HEK293 (cell line): ENCODE measurements at regions of chr5 and their contacts with region 1.

Region 1: DNA sequence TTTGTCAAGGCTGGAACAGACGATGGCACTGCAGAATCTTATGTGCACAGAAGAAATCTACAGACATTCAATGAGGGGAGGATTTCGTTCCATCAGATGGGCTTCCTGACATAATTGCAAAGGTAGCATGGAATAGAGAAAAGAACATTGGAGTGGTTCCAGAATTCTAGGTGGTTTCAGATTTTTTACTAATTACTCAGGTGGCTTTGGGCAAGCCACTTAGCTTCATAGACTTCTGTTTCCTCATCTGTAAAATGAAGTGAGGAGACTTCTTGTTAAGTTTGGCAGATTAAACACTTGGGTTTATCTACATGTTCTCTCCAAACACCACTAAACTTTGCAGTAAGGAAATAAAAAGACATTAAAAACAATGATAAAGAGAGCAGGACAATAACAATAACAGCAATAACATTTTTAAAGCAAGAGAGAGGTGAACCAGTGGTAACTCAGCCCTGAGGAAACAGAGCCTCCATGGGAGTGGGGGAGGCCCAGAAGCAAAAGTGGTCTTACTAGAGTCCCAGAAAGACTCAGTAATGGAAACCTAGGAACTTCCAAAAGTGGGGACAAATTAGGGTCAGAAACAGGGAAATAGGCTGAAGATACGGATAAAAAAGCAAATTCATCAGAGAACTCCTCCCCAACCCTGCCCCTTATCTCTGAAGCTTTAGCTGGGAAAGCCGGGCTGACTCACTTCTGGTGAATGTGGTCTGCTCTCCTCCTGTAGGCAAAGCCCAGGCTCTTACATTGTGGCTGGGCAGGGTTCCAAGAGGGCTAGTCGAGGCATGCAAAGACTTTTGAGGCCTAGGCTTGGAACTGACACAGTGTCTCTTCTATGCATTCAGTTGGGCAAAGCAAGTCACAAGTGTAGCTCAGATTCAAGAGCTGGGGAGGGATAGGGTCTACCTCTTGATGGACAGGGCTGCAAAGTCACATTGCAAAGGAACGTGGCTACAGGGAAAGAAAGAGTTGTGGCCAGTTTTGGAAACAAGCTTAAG is 11.8 kb upstream of the ACTBL2 start:
- H3K4me3 ChIP-seq: no peak overlapping the region
- H3K27ac ChIP-seq: peak overlapping the region; percentile 73
- H3K4me1 ChIP-seq: peaks cover 17% of the 10 kb centered on the region
- CTCF ChIP-seq: no peak

Region 2: GRCh38 chr5:57442080-57442839 is 52.1 kb before region 1 on chr5:
- CTCF ChIA-PET with region 1: interaction called, 6 read pairs
- POLR2A ChIA-PET with region 1: interaction called, 14 read pairs
- H3K4me3 ChIP-seq: no peak overlapping the region
- H3K27ac ChIP-seq: peak overlapping the region; percentile 96
- H3K4me1 ChIP-seq: peaks cover 19% of the 10 kb centered on the region
- CTCF ChIP-seq: no peak; the same call in 1 of the 2 replicates

Region 3: GRCh38 chr5:58048954-58049353 is 554.6 kb after region 1 on chr5:
- CTCF ChIA-PET with region 1: no interaction called
- POLR2A ChIA-PET with region 1: no interaction called
- H3K4me3 ChIP-seq: no peak overlapping the region
- H3K27ac ChIP-seq: no peak overlapping the region
- H3K4me1 ChIP-seq: no peaks in the 10 kb centered on the region
- CTCF ChIP-seq: no peak